Colonic mucosa (tissue), 4 donors: ENCODE measurements at regions of chr21 and their contacts with region 1.

Region 1: DNA sequence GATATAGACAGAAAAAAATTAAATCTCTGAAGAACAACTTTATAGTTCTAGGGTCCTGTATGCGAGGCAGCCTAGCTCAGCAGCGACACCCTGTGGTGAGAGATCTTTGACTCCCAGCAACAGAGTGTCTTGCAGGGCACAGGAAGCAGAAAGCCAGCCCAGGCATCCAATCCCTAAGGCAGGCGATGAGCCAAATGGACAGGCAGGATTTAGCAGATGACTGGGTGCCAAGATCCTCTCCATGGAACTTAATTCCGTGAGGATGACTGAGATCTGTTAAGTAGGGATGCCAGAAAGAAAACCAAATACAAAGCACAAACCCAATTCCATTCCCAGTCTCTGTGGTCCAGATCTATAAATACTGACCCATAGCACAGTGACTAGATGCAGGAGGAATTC is 38.8 kb downstream of the HLCS start:
- DNase-seq: peak; percentile 87
- H3K4me3 ChIP-seq: no peak overlapping the region
- H3K27ac ChIP-seq: no peak overlapping the region
- H3K4me1 ChIP-seq: no peaks in the 10 kb centered on the region
- H3K27me3 ChIP-seq: no peaks in the 10 kb centered on the region
- CTCF ChIP-seq: peak; percentile 85

Region 2: GRCh38 chr21:36288651-36289243 is 639.0 kb before region 1 on chr21:
- intact Hi-C with region 1: no loop called
- DNase-seq: no peak
- H3K4me3 ChIP-seq: no peak overlapping the region
- H3K27ac ChIP-seq: no peak overlapping the region
- H3K4me1 ChIP-seq: no peaks in the 10 kb centered on the region
- H3K27me3 ChIP-seq: no peaks in the 10 kb centered on the region
- CTCF ChIP-seq: no peak

Region 3: GRCh38 chr21:36429947-36430546 is 497.7 kb before region 1 on chr21:
- intact Hi-C with region 1: loop called (anchors 10 kb)
- DNase-seq: peak; percentile 32
- H3K4me3 ChIP-seq: no peak overlapping the region
- H3K27ac ChIP-seq: no peak overlapping the region
- H3K4me1 ChIP-seq: no peaks in the 10 kb centered on the region
- H3K27me3 ChIP-seq: no peaks in the 10 kb centered on the region
- CTCF ChIP-seq: no peak

Region 4: DNA sequence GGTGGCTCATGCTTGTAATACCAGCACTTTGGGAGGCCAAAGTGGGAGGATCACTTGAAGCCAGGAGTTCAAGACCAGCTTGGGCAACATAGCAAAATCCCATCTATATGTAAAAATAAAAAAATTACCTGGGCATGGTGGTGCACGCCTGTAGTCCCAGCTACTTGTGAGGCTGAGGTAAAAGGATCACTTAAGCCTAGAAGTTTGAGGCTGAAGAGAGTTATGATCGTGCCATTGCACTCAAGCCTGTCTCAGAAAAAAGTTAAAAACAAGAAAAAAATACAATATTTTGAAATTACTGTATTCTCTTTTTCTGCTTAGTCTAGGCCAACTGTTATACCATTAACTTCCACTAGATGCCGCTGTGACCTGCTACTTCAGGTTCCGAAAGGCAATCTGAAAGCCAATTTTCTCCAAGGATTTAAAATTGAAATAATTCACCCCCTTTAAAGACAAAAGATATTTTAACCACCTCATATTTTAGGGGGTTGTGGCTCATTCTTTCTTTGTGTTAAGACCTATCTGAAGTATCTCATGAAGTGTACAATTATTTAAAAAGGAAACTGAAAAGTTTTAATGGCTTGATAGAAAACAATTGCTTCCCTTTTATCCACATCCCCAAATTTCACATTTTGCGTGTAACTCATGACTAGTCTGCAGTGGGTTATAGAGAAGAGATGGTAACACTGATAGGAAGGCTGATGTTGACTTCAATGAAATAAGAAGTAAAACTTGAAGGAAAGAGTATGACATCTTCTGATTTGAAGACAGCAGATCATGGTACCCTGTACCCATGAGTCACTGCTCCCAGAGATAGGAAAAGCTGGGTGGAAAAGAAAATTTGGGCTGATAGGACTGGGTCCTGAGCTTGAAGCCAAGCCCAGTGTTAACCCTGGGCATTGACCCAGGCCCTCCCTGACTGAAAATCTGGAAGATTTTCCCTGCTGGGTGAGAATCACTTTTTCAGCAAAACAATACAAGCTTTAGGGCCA is 423.4 kb before region 1 on chr21:
- intact Hi-C with region 1: loop called (anchors 5 kb)
- DNase-seq: peak; percentile 48
- H3K4me3 ChIP-seq: no peak overlapping the region
- H3K27ac ChIP-seq: no peak overlapping the region
- H3K4me1 ChIP-seq: no peaks in the 10 kb centered on the region
- H3K27me3 ChIP-seq: no peaks in the 10 kb centered on the region
- CTCF ChIP-seq: peak; percentile 90